ENCODE measurements at regions of chr2 and their contacts with region 1.

Region 1: DNA sequence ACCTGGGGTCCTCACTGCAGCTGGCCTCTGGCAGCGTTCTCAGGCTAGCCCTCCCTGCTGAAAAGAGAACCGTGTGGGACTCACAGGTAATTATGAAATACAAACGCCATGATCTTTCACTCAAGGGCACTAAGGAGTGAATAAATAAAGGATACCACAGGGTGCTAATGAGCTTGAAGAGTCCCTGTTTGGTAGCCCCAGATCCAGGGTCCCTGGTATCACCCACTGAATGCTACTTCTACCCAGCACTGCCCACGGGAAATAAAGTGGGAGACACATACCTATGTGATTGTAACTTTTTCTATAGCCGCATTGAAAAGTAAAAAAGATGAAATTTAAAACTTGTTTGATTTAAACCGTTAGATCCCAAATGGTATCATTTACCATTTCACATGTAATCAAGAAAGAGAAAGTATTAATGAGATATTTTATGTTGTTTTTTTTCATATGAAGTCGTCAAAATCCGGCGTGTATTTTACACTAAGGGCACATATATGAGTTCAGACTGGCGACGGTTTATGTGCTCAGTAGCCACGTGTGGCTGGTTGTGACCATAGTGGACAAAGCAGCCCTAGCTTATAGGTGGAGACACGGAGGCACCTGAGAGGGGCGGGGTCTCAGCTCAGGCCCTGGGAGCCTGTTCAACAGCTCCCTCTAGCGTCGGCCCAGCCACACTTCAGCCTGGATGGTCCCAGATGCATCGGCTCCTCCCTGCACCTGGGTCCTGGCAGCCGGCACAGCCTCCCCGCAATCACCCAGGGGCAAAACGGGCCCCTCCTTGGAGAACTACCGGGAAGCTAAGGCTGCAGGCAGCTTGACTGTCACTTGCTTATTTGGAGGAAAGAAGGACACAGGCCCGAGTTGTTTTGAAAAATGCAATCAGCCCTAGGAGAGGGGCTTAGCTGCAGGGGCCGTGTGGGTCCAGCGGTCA is 39.2 kb downstream of the ODC1 start:
- H3K4me3 Mint-ChIP-seq: no peak overlapping the region
- H3K27ac Mint-ChIP-seq: peak overlapping the region; percentile 67
- H3K4me1 Mint-ChIP-seq: peaks cover 87% of the 10 kb centered on the region
- H3K27me3 Mint-ChIP-seq: peaks cover 11% of the 10 kb centered on the region

Region 2: GRCh38 chr2:10269711-10270610 is 139.0 kb before region 1 on chr2:
- intact Hi-C with region 1: loop called (anchors 1 kb)
- H3K4me3 Mint-ChIP-seq: no peak overlapping the region
- H3K27ac Mint-ChIP-seq: no peak overlapping the region
- H3K4me1 Mint-ChIP-seq: peaks cover 23% of the 10 kb centered on the region
- H3K27me3 Mint-ChIP-seq: peaks cover 12% of the 10 kb centered on the region

Region 3: GRCh38 chr2:10302479-10303180 is 106.3 kb before region 1 on chr2 and contains the start of gene HPCAL1:
- intact Hi-C with region 1: loop called (anchors 10 kb)
- H3K4me3 Mint-ChIP-seq: peak within 1 kb of the TSS; percentile 98
- H3K27ac Mint-ChIP-seq: peak within 1 kb of the TSS; percentile 92
- H3K4me1 Mint-ChIP-seq: peaks cover 71% of the 10 kb centered on the region
- H3K27me3 Mint-ChIP-seq: no peaks in the 10 kb centered on the region

Region 4: DNA sequence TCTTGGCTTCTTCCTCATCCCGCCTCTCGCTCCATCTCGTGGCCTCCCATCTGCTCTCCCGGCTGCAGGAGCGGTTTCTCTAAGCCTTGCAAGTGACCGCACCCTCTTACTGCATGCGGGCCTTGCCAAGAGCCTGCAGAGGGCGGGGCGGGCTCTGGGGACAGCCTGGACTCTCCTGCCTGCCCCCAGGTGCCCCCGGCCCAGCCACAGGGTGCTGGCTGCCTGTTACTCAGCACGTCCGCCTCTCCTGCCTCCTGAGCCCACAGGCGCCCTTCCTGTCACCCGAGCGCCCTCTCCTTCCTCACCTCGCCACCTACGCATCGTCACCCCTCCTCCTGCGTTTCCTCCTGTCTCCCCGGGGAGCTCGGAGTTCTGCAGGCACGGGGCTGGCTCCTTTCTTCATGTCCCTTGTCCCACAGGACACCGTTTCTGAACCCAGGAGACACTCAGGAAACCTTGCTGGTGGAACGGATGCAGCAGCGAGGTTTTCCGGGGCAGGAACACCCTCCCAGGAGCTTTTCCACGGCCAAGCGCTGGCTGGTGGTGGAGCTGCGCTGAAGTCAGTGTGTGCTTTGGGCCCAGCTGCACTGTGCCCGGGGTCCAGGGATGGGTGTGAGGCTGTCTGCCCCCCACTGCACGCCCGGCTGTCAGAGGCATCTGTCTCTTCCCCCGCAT is 77.8 kb before region 1 on chr2:
- intact Hi-C with region 1: loop called (anchors 10 kb)
- H3K4me3 Mint-ChIP-seq: peak overlapping the region; percentile 63
- H3K27ac Mint-ChIP-seq: peak overlapping the region; percentile 95
- H3K4me1 Mint-ChIP-seq: peaks cover 77% of the 10 kb centered on the region
- H3K27me3 Mint-ChIP-seq: no peaks in the 10 kb centered on the region

Region 5: GRCh38 chr2:10369269-10370255 is 39.4 kb before region 1 on chr2:
- intact Hi-C with region 1: no loop called
- H3K4me3 Mint-ChIP-seq: no peak overlapping the region
- H3K27ac Mint-ChIP-seq: no peak overlapping the region
- H3K4me1 Mint-ChIP-seq: peaks cover 24% of the 10 kb centered on the region
- H3K27me3 Mint-ChIP-seq: no peaks in the 10 kb centered on the region

Region 6: GRCh38 chr2:10434886-10435819 is 26.2 kb after region 1 on chr2:
- intact Hi-C with region 1: loop called (anchors 1 kb)
- H3K4me3 Mint-ChIP-seq: no peak overlapping the region
- H3K27ac Mint-ChIP-seq: no peak overlapping the region
- H3K4me1 Mint-ChIP-seq: peaks cover 29% of the 10 kb centered on the region
- H3K27me3 Mint-ChIP-seq: peaks cover 14% of the 10 kb centered on the region